Cardiac septum (tissue), 1 donor: ENCODE measurements at regions of chr16 and their contacts with region 1.

Region 1: GRCh38 chr16:74309789-74310781 is 13.5 kb downstream of the PSMD7 start:
- DNase-seq: no peak

Region 2: GRCh38 chr16:74325641-74326040 is 15.6 kb after region 1 on chr16:
- intact Hi-C with region 1: loop called (anchors 2 kb)
- DNase-seq: no peak

Region 3: GRCh38 chr16:74431516-74431915 is 121.4 kb after region 1 on chr16:
- intact Hi-C with region 1: loop called (anchors 5 kb)
- DNase-seq: no peak

Region 4: DNA sequence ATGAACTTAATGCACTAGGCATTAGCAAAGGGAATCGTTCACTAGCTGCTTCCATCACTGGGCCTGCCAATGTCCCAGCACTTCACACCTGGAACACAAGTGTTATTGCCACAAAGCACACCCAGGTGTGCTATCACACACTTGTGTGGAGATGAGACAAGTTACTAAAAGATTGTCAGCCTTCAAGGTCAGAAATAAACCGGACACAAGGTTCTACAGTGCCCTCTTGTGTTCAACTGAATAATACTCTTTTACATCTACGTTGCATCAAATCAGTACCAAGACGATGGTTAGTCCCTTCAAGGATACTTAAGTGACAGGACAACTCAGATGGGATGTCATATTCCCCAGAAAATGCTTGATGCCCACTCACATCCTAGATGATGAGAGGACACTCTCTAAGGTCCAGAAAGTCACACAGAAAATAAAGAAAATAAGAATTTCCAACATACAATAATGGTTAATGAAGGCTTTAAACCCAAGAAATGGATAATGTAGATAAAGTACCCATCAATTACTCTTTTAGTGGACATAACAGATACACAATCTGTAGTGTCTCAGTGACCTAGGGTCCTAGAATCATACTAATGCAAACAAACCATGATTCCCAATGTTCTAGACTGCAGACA is 313.2 kb after region 1 on chr16:
- intact Hi-C with region 1: loop called (anchors 10 kb)
- DNase-seq: no peak